ENCODE measurements at regions of chr6 and their contacts with region 1.

Region 1: DNA sequence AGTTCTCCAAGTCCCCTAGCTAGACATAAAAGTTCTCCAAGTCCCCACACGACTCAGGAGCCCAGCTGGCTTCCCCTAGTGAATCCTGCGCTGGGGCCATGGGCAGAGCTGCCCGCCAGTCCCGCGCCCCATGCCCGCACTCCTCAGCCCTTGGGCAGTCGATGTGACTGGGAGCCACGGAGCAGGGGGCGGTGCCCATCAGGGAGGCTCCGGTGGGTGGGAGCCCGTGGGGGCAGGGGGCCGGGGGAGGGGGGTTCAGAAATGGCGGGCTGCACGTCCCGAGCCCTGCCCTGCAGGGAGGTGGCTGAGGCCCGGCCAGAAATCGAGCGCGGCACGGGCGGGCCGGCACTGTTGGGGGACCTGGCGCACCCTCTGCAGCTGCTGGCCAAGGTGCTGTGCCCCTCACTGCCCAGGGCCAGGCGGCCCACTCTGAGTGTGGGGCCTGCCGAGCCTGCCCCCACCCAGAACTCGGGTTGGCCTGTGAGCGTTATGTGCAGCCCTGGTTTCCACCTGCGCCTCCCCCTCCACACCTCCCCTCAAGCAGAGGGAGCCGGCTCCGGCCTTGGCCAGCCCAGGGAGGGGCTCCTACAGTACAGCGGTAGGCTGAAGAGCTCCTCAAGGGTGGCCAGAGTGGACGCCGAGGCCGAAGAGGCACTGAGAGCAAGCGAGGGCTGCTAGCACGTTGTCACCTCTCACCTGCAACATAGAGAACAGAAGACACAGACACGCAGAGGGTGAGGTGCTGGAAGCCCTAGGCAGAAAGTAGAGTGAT is 11.4 kb downstream of the GSTA5 start:
- DNase-seq: no peak
- ATAC-seq: no peak
- H3K4me3 ChIP-seq: no peak overlapping the region
- H3K27ac ChIP-seq: no peak overlapping the region
- H3K4me1 ChIP-seq: no peaks in the 10 kb centered on the region
- H3K27me3 ChIP-seq: no peaks in the 10 kb centered on the region
- CTCF ChIP-seq: no peak
- POLR2A ChIP-seq: no peak

Region 2: DNA sequence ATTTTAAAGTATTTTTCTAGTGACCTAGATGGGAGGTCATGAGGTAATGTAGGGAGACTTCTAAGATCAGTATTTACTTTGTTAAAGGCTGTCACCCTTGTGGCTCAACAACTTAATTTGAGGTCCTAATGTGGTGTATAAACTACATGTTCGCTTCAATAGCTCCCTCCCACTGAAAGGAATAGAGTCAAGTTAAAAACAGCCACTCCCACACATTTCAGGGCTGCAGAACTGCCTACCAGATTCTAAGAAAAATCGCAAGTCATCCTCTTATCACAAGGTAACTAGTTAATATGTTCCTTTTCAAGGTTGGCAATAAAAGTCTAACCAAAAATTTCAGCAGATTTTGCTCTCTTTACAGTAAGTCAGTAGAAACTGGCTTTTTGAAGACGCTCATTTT is 40.8 kb before region 1 on chr6:
- in situ Hi-C with region 1: loop called in 2 of 4 experiments (anchors 5 kb)
- intact Hi-C with region 1: loop called (anchors 2 kb)
- DNase-seq: no peak
- ATAC-seq: no peak
- H3K4me3 ChIP-seq: no peak overlapping the region
- H3K27ac ChIP-seq: no peak overlapping the region
- H3K4me1 ChIP-seq: no peaks in the 10 kb centered on the region
- H3K27me3 ChIP-seq: no peaks in the 10 kb centered on the region
- CTCF ChIP-seq: no peak
- POLR2A ChIP-seq: no peak

Region 3: DNA sequence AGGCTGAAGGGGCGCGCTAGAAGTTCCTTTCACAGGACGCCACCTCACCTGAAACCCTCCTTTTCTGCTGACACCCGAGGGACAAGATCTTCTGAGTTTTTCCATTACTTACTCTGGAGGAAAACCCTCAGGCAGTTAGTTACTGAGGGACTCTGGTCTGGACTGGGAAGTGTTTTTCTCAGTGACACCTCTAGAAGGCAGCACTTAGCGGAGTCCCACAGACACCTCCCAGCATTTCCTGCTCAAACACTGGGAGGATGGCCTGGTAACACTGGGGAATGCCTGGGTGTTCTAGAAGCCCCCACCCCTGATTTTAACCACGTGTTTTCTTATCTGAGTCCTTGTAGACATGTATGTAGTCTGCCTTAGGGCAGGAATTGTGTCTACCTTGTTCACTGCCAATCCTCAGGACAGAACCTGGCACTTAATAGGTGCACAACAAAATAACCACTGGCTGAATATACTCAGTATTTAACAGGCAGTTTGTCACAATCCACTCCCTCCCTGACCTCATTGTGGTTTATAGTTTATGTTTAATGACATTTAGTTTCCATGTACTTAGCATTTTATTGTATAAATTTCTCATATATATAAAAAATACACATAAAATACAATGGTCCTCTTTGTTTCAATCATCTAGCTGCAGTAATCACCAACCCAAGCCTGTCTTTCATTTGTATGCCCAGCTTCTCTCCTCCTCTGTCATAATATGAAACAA is 75.5 kb after region 1 on chr6:
- in situ Hi-C with region 1: no loop called
- intact Hi-C with region 1: no loop called
- DNase-seq: no peak
- ATAC-seq: no peak
- H3K4me3 ChIP-seq: no peak overlapping the region
- H3K27ac ChIP-seq: no peak overlapping the region
- H3K4me1 ChIP-seq: no peaks in the 10 kb centered on the region
- H3K27me3 ChIP-seq: no peaks in the 10 kb centered on the region
- CTCF ChIP-seq: no peak
- POLR2A ChIP-seq: no peak

Measured in gastrocnemius medialis (tissue), 4 donors.